Panc1 (cell line): ENCODE measurements at regions of chr22 and their contacts with region 1.

Region 1: DNA sequence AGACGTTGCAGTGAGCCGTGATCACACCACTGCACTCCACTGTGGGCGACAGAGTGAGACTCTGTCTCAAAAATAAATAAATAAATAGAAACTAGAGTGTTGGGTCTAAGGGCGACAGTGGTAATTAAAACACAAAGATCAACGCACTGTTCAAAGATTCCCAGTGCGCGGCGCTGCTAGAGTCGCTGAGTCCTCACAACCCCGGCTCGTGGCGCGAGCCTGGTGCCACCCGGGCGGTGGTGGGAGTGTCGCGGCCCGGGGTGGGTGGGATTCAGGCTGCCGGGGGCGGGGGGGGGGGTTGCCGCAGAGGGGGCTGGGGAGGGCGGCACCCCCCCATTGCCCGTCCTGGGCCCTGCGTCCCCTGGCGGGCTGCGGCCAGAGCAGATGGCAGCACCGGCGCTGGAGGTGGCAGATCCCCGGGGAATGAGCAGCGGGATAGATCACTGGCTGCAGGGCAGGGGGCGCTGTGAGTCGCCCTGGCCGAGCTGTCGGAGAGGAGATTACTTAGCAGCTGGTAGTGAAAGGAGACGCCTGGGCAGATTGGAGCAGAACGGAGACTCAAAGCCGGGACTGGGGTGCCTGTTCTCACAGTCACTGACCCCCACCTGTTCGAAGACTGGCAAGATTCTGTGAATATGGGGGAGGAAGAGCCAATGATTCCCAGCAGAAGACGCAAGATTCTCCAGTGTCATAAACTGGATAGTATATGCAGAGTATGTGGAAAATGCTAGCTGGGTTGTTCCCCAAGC is 30.2 kb upstream of the APOBEC3A start:
- DNase-seq: peak; percentile 47
- ATAC-seq: peak; percentile 93
- H3K4me3 ChIP-seq: peak overlapping the region; percentile 41 to 55
- H3K27ac ChIP-seq: peak overlapping the region; percentile 54
- H3K4me1 ChIP-seq: peaks cover 20% of the 10 kb centered on the region
- H3K27me3 ChIP-seq: no peaks in the 10 kb centered on the region
- CTCF ChIP-seq: peak; percentile 93

Region 2: DNA sequence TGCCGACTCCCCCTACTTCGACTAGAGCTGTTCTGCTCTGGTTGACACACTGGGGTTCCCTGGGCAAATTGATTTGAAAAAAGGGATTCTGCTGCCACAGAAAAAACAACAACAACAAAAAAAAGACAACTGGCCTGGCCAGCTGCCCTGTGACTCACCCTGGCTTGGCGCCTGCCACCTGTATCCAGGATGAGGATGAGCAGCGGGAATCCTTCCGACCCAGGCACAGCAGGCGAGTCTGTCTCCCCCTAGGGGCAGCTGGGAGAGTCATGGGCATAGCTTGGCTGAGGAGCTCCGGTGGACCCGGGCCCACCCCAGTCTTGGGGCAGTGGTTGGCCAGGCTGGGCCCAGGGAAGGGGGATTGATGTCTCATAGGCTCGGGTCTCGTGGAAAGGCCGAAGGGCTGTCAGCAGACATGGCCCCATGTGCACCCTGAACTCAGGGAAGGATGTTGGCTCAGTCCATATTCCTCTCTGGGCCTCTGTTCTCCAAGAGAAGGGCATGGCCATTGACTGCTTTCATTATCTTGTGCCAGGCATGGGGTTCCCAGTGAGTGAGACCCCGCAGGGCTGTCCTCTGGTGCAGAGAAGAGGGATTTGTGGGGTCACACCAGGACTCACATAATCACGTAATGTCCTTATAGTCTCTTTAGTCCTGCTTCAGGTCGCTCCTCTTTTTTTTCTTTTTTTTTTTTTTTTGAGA is 161.0 kb before region 1 on chr22:
- CTCF ChIA-PET with region 1: interaction called, 17 read pairs
- POLR2A ChIA-PET with region 1: no interaction called
- in situ Hi-C with region 1: no loop called
- intact Hi-C with region 1: no loop called
- DNase-seq: no peak
- ATAC-seq: peak; percentile 71
- H3K4me3 ChIP-seq: no peak overlapping the region
- H3K27ac ChIP-seq: no peak overlapping the region
- H3K4me1 ChIP-seq: no peaks in the 10 kb centered on the region; the same call in 1 of the 2 replicates
- H3K27me3 ChIP-seq: no peaks in the 10 kb centered on the region
- CTCF ChIP-seq: peak; percentile 88

Region 3: DNA sequence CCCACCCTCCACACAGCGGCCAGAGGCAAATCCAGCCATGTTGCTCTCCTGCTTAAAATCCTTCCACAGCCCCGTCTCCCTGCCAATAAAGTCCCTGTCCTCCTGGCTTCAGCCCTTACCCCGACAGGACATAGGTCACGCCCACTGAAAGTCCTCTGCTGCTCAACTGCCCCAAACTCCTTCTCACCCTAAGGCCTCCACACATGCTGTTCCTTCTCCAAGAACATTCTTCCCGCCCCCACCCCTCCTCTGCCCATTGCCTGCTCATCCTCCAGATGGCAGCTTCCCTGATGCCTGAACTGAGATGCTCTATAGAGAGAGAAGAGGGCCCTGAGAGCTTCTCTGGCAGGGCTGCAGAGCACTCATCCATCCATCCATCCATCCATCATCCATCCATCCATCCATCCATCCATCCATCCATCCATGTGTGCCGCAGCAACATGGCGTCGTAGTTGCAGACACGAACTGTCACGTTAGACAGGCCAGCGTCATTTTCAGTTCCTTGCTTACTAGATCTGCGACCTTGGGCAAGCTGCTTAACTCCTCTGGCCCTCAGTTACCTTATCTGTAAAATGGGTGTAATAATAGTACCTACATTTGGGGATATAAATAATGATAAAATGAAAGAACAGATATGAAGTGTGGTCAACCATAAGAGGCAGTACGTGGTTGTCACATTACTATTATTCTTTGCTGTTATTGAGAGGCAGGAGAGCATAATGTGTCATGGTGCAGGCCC is 92.8 kb before region 1 on chr22:
- CTCF ChIA-PET with region 1: interaction called, 14 read pairs
- POLR2A ChIA-PET with region 1: no interaction called
- in situ Hi-C with region 1: no loop called
- intact Hi-C with region 1: no loop called
- DNase-seq: no peak
- ATAC-seq: no peak
- H3K4me3 ChIP-seq: no peak overlapping the region
- H3K27ac ChIP-seq: no peak overlapping the region
- H3K4me1 ChIP-seq: peaks cover 9% of the 10 kb centered on the region; the same call in 1 of the 2 replicates
- H3K27me3 ChIP-seq: no peaks in the 10 kb centered on the region
- CTCF ChIP-seq: no peak

Region 4: DNA sequence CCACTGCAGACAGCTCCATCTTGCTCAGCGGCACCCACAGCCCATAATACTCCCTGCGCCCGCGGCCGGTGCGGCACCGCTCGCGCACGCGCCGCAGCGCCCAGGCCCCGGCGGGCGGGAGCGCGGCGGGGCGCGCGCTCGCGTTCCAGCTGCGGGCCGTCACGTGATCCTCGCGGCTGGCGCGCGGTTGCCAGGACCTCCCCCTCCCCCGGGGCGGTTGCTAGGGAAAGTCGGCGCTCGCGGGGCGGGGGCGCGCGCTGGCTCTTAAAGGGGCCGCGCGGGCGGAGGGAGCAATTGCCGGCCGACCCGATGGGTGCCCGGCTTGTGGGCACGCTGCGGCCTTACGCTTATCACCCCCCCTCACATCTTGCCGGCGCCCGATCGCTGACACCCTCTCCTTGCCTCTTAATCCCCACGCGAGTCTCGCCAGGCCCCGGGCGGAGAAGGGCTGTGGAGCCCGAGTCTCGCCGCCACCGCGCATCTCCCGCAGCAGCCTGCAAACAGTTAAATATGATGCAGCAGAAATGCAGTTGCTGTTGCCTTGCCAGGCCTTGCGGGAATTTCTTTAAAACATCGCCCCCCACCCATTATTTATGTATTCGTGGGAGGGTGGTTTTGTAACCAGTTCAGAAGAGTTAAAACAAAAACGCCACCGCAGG is 54.9 kb before region 1 on chr22 and contains the start of gene CBX6:
- CTCF ChIA-PET with region 1: interaction called, 7 read pairs
- POLR2A ChIA-PET with region 1: no interaction called
- in situ Hi-C with region 1: no loop called
- intact Hi-C with region 1: loop called (anchors 10 kb)
- DNase-seq: no peak
- ATAC-seq: peak; percentile 86
- H3K4me3 ChIP-seq: peak within 1 kb of the TSS; percentile 63 to 74
- H3K27ac ChIP-seq: peak within 1 kb of the TSS; percentile 83
- H3K4me1 ChIP-seq: peaks cover 23% of the 10 kb centered on the region
- H3K27me3 ChIP-seq: no peaks in the 10 kb centered on the region
- CTCF ChIP-seq: no peak
- total RNA-seq, gene CBX6: 98.4 TPM

Region 5: GRCh38 chr22:39300186-39300830 is 373.1 kb after region 1 on chr22:
- CTCF ChIA-PET with region 1: interaction called, 10 read pairs
- POLR2A ChIA-PET with region 1: no interaction called
- in situ Hi-C with region 1: no loop called
- intact Hi-C with region 1: no loop called
- DNase-seq: no peak
- ATAC-seq: peak; percentile 64
- H3K4me3 ChIP-seq: peak overlapping the region in 1 of 2 experiments; percentile 36; a peak in 2 of 4 replicates
- H3K27ac ChIP-seq: peak overlapping the region; percentile 86
- H3K4me1 ChIP-seq: peaks cover 51% of the 10 kb centered on the region
- H3K27me3 ChIP-seq: no peaks in the 10 kb centered on the region
- CTCF ChIP-seq: no peak

Region 6: GRCh38 chr22:39490966-39491680 is 563.9 kb after region 1 on chr22:
- CTCF ChIA-PET with region 1: no interaction called
- POLR2A ChIA-PET with region 1: interaction called, 15 read pairs
- in situ Hi-C with region 1: no loop called
- intact Hi-C with region 1: no loop called
- DNase-seq: no peak
- ATAC-seq: no peak
- H3K4me3 ChIP-seq: no peak overlapping the region
- H3K27ac ChIP-seq: no peak overlapping the region
- H3K4me1 ChIP-seq: no peaks in the 10 kb centered on the region
- H3K27me3 ChIP-seq: no peaks in the 10 kb centered on the region
- CTCF ChIP-seq: no peak